ENCODE measurements at regions of chr17 and their contacts with region 1.

Region 1: GRCh38 chr17:7823581-7824397 is 10.2 kb upstream of the KDM6B start:
- DNase-seq: no peak
- ATAC-seq: no peak
- H3K4me3 ChIP-seq: no peak overlapping the region
- H3K27ac ChIP-seq: no peak overlapping the region
- H3K4me1 ChIP-seq: no peaks in the 10 kb centered on the region
- H3K27me3 ChIP-seq: no peaks in the 10 kb centered on the region
- CTCF ChIP-seq: no peak
- POLR2A ChIP-seq: no peak

Region 2: GRCh38 chr17:7740481-7741001 is 83.2 kb before region 1 on chr17:
- in situ Hi-C with region 1: no loop called
- intact Hi-C with region 1: loop called (anchors 5 kb)
- DNase-seq: no peak
- ATAC-seq: no peak
- H3K4me3 ChIP-seq: peak overlapping the region in 3 of 4 donors; percentile 13 to 25 (median 15)
- H3K27ac ChIP-seq: no peak overlapping the region
- H3K4me1 ChIP-seq: no peaks in the 10 kb centered on the region
- H3K27me3 ChIP-seq: peaks cover 0 to 10% (median 7%) of the 10 kb centered on the region in 3 donors
- CTCF ChIP-seq: no peak
- POLR2A ChIP-seq: no peak

Region 3: GRCh38 chr17:7745748-7746470 is 77.9 kb before region 1 on chr17:
- in situ Hi-C with region 1: loop called in 1 of 4 experiments (anchors 10 kb)
- intact Hi-C with region 1: loop called (anchors 5 kb)
- DNase-seq: no peak
- ATAC-seq: peak in 1 of 2 donors; percentile 36
- H3K4me3 ChIP-seq: no peak overlapping the region
- H3K27ac ChIP-seq: no peak overlapping the region
- H3K4me1 ChIP-seq: no peaks in the 10 kb centered on the region
- H3K27me3 ChIP-seq: peaks cover 0 to 7% (median 0%) of the 10 kb centered on the region in 3 donors
- CTCF ChIP-seq: no peak
- POLR2A ChIP-seq: no peak

Region 4: GRCh38 chr17:7851438-7852256 is 27.9 kb after region 1 on chr17:
- in situ Hi-C with region 1: no loop called
- intact Hi-C with region 1: loop called (anchors 1 kb)
- DNase-seq: peak; percentile 85 to 88
- ATAC-seq: peak; percentile 72 to 81
- H3K4me3 ChIP-seq: peak overlapping the region in 1 of 4 donors; percentile 7
- H3K27ac ChIP-seq: peak overlapping the region; percentile 12 to 72 (median 54)
- H3K4me1 ChIP-seq: peaks cover 18 to 20% of the 10 kb centered on the region in 2 donors
- H3K27me3 ChIP-seq: no peaks in the 10 kb centered on the region
- CTCF ChIP-seq: peak; percentile 98 to 100 (median 99)
- POLR2A ChIP-seq: peak in 1 of 2 donors; percentile 23

Region 5: DNA sequence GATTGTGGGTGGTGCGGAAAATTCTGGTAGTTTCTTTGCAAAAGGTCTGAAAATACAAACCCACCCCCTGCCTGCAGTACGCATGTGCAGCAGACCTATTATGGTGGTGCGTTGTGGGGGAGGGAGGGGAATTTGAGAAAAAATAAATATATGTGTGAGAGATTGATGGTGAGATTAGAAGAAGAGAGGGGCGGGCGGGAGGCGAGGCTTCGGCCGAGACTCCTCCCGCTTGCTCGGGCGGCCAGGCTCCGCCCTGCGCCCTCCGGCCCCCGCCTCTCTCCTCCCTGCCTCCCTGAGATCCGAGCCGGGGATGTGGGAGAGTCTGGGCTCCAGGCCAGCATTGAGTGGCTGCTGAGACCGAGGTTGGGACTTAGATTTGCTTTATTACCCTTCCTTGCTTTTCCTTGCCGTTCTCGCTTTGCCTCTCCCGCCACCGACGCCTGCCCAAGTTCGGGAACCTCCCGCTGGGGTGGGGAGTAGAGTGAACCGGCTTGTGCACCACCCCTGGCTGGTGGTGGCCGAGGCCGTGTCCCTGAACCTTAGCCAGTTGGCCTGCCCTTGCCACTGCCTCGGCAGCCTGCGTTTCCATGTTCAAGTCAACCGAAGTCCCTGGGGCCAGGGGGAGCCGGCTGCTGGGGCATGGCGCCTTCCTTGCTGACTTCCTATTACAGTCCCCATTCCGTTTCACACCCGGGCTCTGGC is 63.8 kb after region 1 on chr17:
- in situ Hi-C with region 1: no loop called
- intact Hi-C with region 1: no loop called
- DNase-seq: peak; percentile 65 to 80
- ATAC-seq: peak; percentile 61 to 72
- H3K4me3 ChIP-seq: peak overlapping the region; percentile 64 to 74 (median 68)
- H3K27ac ChIP-seq: peak overlapping the region; percentile 77 to 89 (median 81)
- H3K4me1 ChIP-seq: peaks cover 41 to 47% of the 10 kb centered on the region in 2 donors
- H3K27me3 ChIP-seq: peaks cover 24 to 27% (median 25%) of the 10 kb centered on the region in 3 donors
- CTCF ChIP-seq: peak in 1 of 5 experiments; percentile 5
- POLR2A ChIP-seq: peak in 1 of 2 donors; percentile 55

Region 6: DNA sequence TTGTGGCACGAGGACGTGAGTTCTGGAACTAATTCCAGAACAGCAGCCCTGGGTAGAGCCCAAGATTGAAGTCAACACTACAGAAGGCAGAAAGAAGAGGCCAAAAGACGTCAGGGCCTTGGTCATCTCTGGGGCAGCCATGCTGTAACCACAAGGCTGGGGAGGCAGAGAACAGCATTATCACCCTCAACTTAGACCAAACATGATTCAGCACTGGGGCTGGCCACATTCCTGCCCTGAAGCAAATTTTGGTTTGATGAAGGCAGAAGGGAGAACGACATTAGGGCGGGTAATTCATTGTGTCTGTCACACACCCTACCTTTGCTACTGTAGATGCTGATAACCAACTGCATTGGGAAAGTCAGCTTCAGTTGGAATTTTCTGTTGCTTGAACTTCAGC is 205.3 kb after region 1 on chr17:
- in situ Hi-C with region 1: no loop called
- intact Hi-C with region 1: no loop called
- DNase-seq: no peak
- ATAC-seq: no peak
- H3K4me3 ChIP-seq: no peak overlapping the region
- H3K27ac ChIP-seq: no peak overlapping the region
- H3K4me1 ChIP-seq: no peaks in the 10 kb centered on the region
- H3K27me3 ChIP-seq: peaks cover 6 to 24% (median 11%) of the 10 kb centered on the region in 3 donors
- CTCF ChIP-seq: no peak
- POLR2A ChIP-seq: no peak

Measured in gastrocnemius medialis (tissue), 4 donors.